ENCODE measurements at regions of chr13 and their contacts with region 1.

Region 1: GRCh38 chr13:95624020-95624419 is 20.5 kb downstream of the DZIP1 start:
- DNase-seq: peak; percentile 39
- ATAC-seq: peak; percentile 86
- H3K4me3 ChIP-seq: no peak overlapping the region
- H3K27ac ChIP-seq: no peak overlapping the region
- H3K4me1 ChIP-seq: no peaks in the 10 kb centered on the region
- H3K27me3 ChIP-seq: no peaks in the 10 kb centered on the region
- CTCF ChIP-seq: peak; percentile 59 to 78 (median 65)
- POLR2A ChIP-seq: no peak
- RAD21 ChIP-seq: peak; percentile 79

Region 2: GRCh38 chr13:95660981-95661581 is 37.1 kb after region 1 on chr13:
- CTCF ChIA-PET with region 1: interaction called, 32 read pairs
- POLR2A ChIA-PET with region 1: no interaction called
- RAD21 ChIA-PET with region 1: interaction called, 3 to 5 read pairs
- intact Hi-C with region 1: loop called (anchors 2 kb)
- DNase-seq: peak; percentile 28
- ATAC-seq: no peak; the same call in 1 of the 2 replicates
- H3K4me3 ChIP-seq: no peak overlapping the region
- H3K27ac ChIP-seq: no peak overlapping the region
- H3K4me1 ChIP-seq: no peaks in the 10 kb centered on the region
- H3K27me3 ChIP-seq: no peaks in the 10 kb centered on the region
- CTCF ChIP-seq: peak; percentile 59 to 74 (median 64); a peak in 5 of 6 replicates
- POLR2A ChIP-seq: no peak
- RAD21 ChIP-seq: peak; percentile 57

Region 3: DNA sequence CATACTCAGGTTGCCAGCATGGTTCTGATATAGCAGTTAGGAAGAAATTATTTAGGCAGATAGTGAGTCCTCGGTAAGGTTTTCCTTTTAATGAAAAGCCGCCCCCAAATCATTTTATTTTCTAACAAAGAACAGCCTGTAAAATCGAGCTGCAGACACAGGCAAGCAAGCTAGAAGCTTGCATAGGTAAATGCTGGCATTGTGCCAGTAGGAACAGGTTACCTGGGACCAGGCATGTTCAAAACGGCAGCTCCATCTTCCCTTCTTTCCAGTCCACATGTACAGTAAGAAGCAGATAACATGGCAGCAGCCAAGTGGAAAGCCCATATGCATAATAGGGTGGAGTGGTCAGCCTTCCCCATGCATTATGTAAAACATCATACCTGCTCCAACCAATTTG is 358.1 kb after region 1 on chr13:
- CTCF ChIA-PET with region 1: interaction called, 5 read pairs
- POLR2A ChIA-PET with region 1: no interaction called
- RAD21 ChIA-PET with region 1: no interaction called
- intact Hi-C with region 1: loop called (anchors 1 kb)
- DNase-seq: no peak
- ATAC-seq: no peak
- H3K4me3 ChIP-seq: no peak overlapping the region
- H3K27ac ChIP-seq: no peak overlapping the region
- H3K4me1 ChIP-seq: no peaks in the 10 kb centered on the region
- H3K27me3 ChIP-seq: no peaks in the 10 kb centered on the region
- CTCF ChIP-seq: no peak
- POLR2A ChIP-seq: no peak
- RAD21 ChIP-seq: no peak

Region 4: GRCh38 chr13:96034662-96035061 is 410.6 kb after region 1 on chr13:
- CTCF ChIA-PET with region 1: no interaction called
- POLR2A ChIA-PET with region 1: no interaction called
- RAD21 ChIA-PET with region 1: no interaction called
- intact Hi-C with region 1: no loop called
- DNase-seq: no peak
- ATAC-seq: no peak
- H3K4me3 ChIP-seq: no peak overlapping the region
- H3K27ac ChIP-seq: no peak overlapping the region
- H3K4me1 ChIP-seq: no peaks in the 10 kb centered on the region
- H3K27me3 ChIP-seq: no peaks in the 10 kb centered on the region
- CTCF ChIP-seq: no peak
- POLR2A ChIP-seq: no peak
- RAD21 ChIP-seq: no peak

Region 5: GRCh38 chr13:96214824-96215445 is 590.9 kb after region 1 on chr13:
- CTCF ChIA-PET with region 1: no interaction called
- POLR2A ChIA-PET with region 1: no interaction called
- RAD21 ChIA-PET with region 1: no interaction called
- intact Hi-C with region 1: loop called (anchors 10 kb)
- DNase-seq: no peak
- ATAC-seq: no peak
- H3K4me3 ChIP-seq: no peak overlapping the region
- H3K27ac ChIP-seq: no peak overlapping the region
- H3K4me1 ChIP-seq: no peaks in the 10 kb centered on the region
- H3K27me3 ChIP-seq: peaks cover 6% of the 10 kb centered on the region
- CTCF ChIP-seq: no peak
- POLR2A ChIP-seq: no peak
- RAD21 ChIP-seq: no peak